ENCODE measurements at regions of chr19 and their contacts with region 1.

Region 1: GRCh38 chr19:4342615-4343369 is 570 bp upstream of the MPND start:
- DNase-seq: peak; percentile 100
- ATAC-seq: peak; percentile 89
- H3K4me3 ChIP-seq: peak overlapping the region; percentile 69 to 75
- H3K27ac ChIP-seq: peak overlapping the region; percentile 86
- H3K4me1 ChIP-seq: peaks cover 7 to 18% of the 10 kb centered on the region in 2 experiments
- H3K27me3 ChIP-seq: no peaks in the 10 kb centered on the region
- CTCF ChIP-seq: peak in 2 of 3 experiments; percentile 5 to 21; a peak in 1 of 6 replicates
- POLR2A ChIP-seq: peak; percentile 78
- RAD21 ChIP-seq: no peak

Region 2: DNA sequence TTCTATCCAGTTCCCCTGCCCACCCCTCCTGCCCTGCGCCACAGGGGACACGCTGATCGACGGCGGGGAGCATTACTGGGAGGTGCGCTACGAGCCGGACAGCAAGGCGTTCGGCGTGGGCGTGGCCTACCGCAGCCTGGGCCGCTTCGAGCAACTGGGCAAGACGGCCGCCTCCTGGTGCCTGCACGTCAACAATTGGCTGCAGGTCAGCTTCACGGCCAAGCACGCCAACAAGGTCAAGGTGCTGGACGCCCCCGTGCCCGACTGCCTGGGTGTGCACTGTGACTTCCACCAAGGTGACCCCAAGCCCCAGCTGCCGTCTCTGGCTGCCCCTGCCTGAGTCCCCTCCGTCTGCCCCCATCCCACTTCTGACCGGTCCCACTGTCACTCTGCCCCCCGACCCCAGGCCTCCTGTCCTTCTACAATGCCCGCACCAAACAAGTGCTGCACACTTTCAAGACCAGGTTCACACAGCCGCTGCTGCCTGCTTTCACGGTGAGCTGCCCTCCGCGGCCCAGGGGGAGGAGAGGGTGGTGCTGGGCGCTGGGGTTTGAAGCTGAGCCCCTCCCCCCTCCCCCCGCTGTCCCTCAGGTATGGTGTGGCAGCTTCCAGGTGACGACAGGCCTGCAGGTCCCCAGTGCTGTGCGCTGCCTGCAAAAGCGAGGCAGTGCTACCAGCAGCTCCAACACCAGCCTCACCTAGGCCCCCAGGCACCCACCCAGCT is 19.7 kb before region 1 on chr19:
- CTCF ChIA-PET with region 1: interaction called, 8 read pairs
- POLR2A ChIA-PET with region 1: interaction called, 11 read pairs
- RAD21 ChIA-PET with region 1: no interaction called
- intact Hi-C with region 1: no loop called
- DNase-seq: no peak
- ATAC-seq: no peak
- H3K4me3 ChIP-seq: no peak overlapping the region
- H3K27ac ChIP-seq: no peak overlapping the region
- H3K4me1 ChIP-seq: peaks cover 7 to 11% of the 10 kb centered on the region in 2 experiments
- H3K27me3 ChIP-seq: no peaks in the 10 kb centered on the region
- CTCF ChIP-seq: no peak
- POLR2A ChIP-seq: no peak
- RAD21 ChIP-seq: no peak

Region 3: DNA sequence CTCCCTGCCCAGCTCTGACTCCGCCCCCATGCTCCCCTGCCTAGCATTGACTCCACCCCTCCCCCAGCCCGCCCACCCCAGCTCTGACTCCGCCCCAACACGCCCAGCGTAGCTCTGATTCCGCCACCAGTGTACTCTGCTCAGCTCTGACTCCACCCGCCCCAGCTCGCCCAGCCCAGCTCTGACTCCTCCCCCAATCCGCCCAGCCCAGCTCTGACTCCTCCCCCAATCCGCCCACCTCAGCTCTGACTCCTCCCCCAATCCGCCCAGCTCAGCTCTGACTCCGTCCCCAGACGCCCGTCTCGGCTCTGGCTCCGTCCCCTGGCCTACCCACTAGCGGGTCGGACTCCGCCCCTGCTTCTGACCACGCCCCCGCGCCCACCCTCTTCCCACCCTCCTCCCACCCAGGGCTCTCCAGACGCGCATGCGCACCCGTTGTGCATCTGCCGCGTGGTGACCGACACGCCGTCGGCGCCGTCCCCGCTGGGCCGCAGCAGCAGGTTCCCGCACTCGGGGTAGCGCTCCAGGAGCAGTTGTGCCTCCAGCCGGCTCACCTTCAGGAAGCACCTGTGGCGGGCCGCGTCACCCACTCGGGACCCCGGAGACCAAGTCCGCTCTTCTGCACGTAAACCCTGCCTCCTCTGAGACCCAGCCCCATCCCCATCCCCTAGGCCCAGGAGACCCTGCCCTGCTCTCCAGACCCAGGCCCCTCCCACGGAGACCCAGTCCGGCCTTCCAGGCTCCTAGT is 14.4 kb before region 1 on chr19:
- CTCF ChIA-PET with region 1: interaction called, 8 read pairs
- POLR2A ChIA-PET with region 1: interaction called, 11 read pairs
- RAD21 ChIA-PET with region 1: no interaction called
- intact Hi-C with region 1: no loop called
- DNase-seq: peak; percentile 87
- ATAC-seq: peak; percentile 84
- H3K4me3 ChIP-seq: peak overlapping the region; percentile 60 to 63
- H3K27ac ChIP-seq: peak overlapping the region; percentile 69
- H3K4me1 ChIP-seq: peaks cover 7 to 20% of the 10 kb centered on the region in 2 experiments
- H3K27me3 ChIP-seq: no peaks in the 10 kb centered on the region
- CTCF ChIP-seq: no peak
- POLR2A ChIP-seq: peak; percentile 88
- RAD21 ChIP-seq: no peak

Measured in HCT116 (cell line).